Panc1 (cell line): ENCODE measurements at regions of chr21 and their contacts with region 1.

Region 1: DNA sequence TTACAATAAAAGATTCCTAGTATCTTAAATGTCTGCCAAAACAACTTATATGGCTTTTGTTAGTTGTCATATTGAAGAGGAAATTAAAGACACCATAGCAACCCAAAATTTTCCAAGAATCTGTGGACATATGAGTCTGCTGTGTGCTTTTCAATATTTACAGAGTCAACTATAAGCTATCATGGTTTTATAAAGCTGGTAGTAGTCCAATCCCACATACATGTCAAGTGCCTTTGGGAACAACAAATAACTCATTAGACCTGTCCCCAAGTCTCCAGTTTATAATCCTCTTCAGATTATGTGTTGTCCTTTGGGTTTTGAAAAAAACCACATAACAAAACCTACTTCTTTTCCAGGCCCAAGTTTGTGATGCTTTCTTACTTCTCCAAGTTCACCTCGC is 293.8 kb upstream of the USP25 start:
- DNase-seq: no peak
- ATAC-seq: no peak
- H3K4me3 ChIP-seq: no peak overlapping the region
- H3K27ac ChIP-seq: no peak overlapping the region
- H3K4me1 ChIP-seq: no peaks in the 10 kb centered on the region
- H3K27me3 ChIP-seq: no peaks in the 10 kb centered on the region
- CTCF ChIP-seq: no peak

Region 2: GRCh38 chr21:15601390-15601789 is 165.4 kb after region 1 on chr21:
- CTCF ChIA-PET with region 1: no interaction called
- POLR2A ChIA-PET with region 1: interaction called, 10 read pairs
- in situ Hi-C with region 1: no loop called
- intact Hi-C with region 1: no loop called
- DNase-seq: no peak
- ATAC-seq: no peak
- H3K4me3 ChIP-seq: no peak overlapping the region
- H3K27ac ChIP-seq: no peak overlapping the region
- H3K4me1 ChIP-seq: no peaks in the 10 kb centered on the region
- H3K27me3 ChIP-seq: no peaks in the 10 kb centered on the region
- CTCF ChIP-seq: no peak